B cell (primary cell): ENCODE measurements at regions of chr10 and their contacts with region 1.

Region 1: GRCh38 chr10:62456611-62457101 is 82.5 kb downstream of the ZNF365 start:
- DNase-seq: peak; percentile 85
- ATAC-seq: peak; percentile 93
- H3K4me3 ChIP-seq: no peak overlapping the region
- H3K4me3 Mint-ChIP-seq: peak overlapping the region; percentile 63
- H3K27ac ChIP-seq: peak overlapping the region in 1 of 2 donors; percentile 1
- H3K27ac Mint-ChIP-seq: peak overlapping the region; percentile 86
- H3K4me1 ChIP-seq: peaks cover 30 to 33% of the 10 kb centered on the region in 2 donors
- H3K4me1 Mint-ChIP-seq: peaks cover 34% of the 10 kb centered on the region
- H3K27me3 ChIP-seq: no peaks in the 10 kb centered on the region
- H3K27me3 Mint-ChIP-seq: no peaks in the 10 kb centered on the region
- CTCF ChIP-seq: no peak

Region 2: GRCh38 chr10:62399211-62399610 is 57.4 kb before region 1 on chr10:
- CTCF ChIA-PET with region 1: no interaction called
- POLR2A ChIA-PET with region 1: no interaction called
- intact Hi-C with region 1: no loop called
- DNase-seq: no peak
- ATAC-seq: no peak
- H3K4me3 ChIP-seq: no peak overlapping the region
- H3K4me3 Mint-ChIP-seq: no peak overlapping the region
- H3K27ac ChIP-seq: no peak overlapping the region
- H3K27ac Mint-ChIP-seq: no peak overlapping the region
- H3K4me1 ChIP-seq: no peaks in the 10 kb centered on the region
- H3K4me1 Mint-ChIP-seq: no peaks in the 10 kb centered on the region
- H3K27me3 ChIP-seq: peaks cover 0 to 3% (median 0%) of the 10 kb centered on the region in 4 experiments
- H3K27me3 Mint-ChIP-seq: peaks cover 24% of the 10 kb centered on the region
- CTCF ChIP-seq: no peak

Region 3: GRCh38 chr10:62502995-62503613 is 46.4 kb after region 1 on chr10:
- CTCF ChIA-PET with region 1: no interaction called
- POLR2A ChIA-PET with region 1: no interaction called
- intact Hi-C with region 1: loop called (anchors 5 kb)
- DNase-seq: no peak
- ATAC-seq: no peak
- H3K4me3 ChIP-seq: no peak overlapping the region
- H3K4me3 Mint-ChIP-seq: no peak overlapping the region
- H3K27ac ChIP-seq: no peak overlapping the region
- H3K27ac Mint-ChIP-seq: no peak overlapping the region
- H3K4me1 ChIP-seq: peaks cover 6 to 7% of the 10 kb centered on the region in 2 donors
- H3K4me1 Mint-ChIP-seq: peaks cover 19% of the 10 kb centered on the region
- H3K27me3 ChIP-seq: no peaks in the 10 kb centered on the region
- H3K27me3 Mint-ChIP-seq: no peaks in the 10 kb centered on the region
- CTCF ChIP-seq: no peak

Region 4: DNA sequence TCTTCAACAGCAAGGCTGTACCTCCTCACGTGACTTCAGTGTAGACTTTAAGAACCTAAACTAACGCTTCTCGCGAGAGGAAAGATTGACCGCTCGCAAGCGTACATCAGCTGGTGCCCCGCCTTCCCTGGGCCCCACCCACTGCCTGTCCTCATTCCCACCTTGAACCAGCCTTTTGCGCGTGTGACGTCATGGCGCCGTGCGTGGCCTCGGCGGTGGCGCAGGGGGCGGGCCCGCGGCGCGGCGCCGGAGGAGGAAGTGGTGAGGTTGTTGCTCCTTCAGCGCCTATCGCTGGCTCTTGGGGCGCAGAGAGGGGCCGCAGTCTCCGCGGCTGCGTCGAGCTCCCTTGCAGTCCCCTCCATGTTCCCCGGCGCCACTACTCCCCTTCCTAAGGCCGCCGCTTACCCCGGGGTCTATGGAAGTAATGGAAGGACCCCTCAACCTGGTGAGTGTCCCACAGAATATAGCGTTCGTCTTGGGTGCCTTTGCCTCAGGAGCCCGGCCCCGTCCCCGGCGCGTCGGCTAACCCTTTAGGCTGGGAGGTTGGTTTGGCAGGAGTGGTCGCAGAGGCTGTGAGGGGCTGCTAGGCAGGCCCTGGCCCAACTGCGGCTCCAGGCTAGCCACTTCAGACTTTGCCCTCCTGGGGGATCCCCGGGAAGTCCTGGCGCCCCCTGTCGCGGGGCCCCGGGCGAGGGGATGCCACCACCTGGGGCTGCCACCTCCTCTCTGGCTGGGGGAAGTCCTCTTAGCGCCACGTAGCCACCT is 676.6 kb after region 1 on chr10 and contains the start of gene NRBF2:
- CTCF ChIA-PET with region 1: no interaction called
- POLR2A ChIA-PET with region 1: no interaction called
- intact Hi-C with region 1: loop called (anchors 1 kb)
- DNase-seq: peak; percentile 99
- ATAC-seq: peak; percentile 86
- H3K4me3 ChIP-seq: peak within 1 kb of the TSS; percentile 89 to 100 (median 95)
- H3K4me3 Mint-ChIP-seq: peak within 1 kb of the TSS; percentile 93
- H3K27ac ChIP-seq: peak within 1 kb of the TSS; percentile 99
- H3K27ac Mint-ChIP-seq: peak within 1 kb of the TSS; percentile 97
- H3K4me1 ChIP-seq: peaks cover 26 to 36% of the 10 kb centered on the region in 2 donors
- H3K4me1 Mint-ChIP-seq: peaks cover 43% of the 10 kb centered on the region
- H3K27me3 ChIP-seq: peaks cover 0 to 2% (median 0%) of the 10 kb centered on the region in 4 experiments
- H3K27me3 Mint-ChIP-seq: peaks cover 3% of the 10 kb centered on the region
- CTCF ChIP-seq: peak; percentile 39
- total RNA-seq, gene NRBF2: 20.5 and 24.6 TPM in 2 replicates